Right cardiac atrium (tissue), 5 donors: ENCODE measurements at regions of chr5 and their contacts with region 1.

Region 1: DNA sequence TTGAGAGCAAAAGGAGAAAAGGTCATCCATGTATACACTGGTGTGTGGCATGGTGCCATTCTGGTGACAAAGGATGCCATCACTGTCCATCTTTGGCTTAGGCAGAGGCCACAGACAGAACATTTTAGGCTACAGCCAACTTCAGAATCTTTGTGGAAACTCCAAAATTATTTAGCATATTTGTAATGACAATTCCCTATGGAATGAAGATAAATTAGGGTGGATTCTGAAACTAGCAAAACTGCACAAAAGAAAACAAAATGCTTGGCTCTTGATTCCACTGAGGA is 92.5 kb downstream of the FBXW11 start:
- DNase-seq: no peak
- ATAC-seq: no peak
- H3K4me3 ChIP-seq: no peak overlapping the region
- H3K27ac ChIP-seq: no peak overlapping the region
- H3K4me1 ChIP-seq: peaks cover 9% of the 10 kb centered on the region
- H3K27me3 ChIP-seq: no peaks in the 10 kb centered on the region

Region 2: DNA sequence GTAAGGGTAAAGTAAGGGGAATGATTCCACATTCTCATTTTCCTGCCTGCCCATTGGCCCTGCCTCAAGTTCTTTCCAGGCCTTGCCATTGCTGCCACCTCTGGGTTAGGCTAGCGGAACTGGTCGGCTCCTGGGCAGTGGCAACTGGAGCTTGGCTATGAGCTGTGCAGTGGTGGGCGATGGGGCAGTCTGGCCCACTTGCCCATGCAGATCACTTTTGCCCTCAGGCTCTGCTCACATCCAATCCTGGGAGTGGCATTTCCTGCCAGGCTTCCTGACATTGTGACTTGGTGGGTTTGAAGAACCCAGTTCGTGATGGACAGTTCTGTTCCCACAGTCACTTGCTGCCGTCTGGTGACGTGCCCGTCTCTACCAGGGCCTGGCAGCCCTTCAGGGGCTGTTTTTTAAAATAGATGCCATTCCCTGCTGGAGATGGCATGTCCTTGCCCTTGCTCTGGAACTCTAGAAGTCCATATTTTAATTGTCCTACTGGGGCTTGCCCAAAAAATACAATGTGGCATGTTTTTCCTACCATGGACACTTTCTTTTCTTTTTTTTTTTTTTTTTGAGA is 408.4 kb before region 1 on chr5:
- intact Hi-C with region 1: no loop called
- DNase-seq: no peak
- ATAC-seq: peak; percentile 44 to 52
- H3K4me3 ChIP-seq: no peak overlapping the region
- H3K27ac ChIP-seq: no peak overlapping the region
- H3K4me1 ChIP-seq: no peaks in the 10 kb centered on the region
- H3K27me3 ChIP-seq: no peaks in the 10 kb centered on the region

Region 3: GRCh38 chr5:172006321-172007174 is 92.6 kb after region 1 on chr5 and contains the start of gene FBXW11:
- intact Hi-C with region 1: loop called in 2 of 4 experiments (anchors 10 kb)
- DNase-seq: peak; percentile 98 to 99 (median 98)
- ATAC-seq: peak; percentile 96
- H3K4me3 ChIP-seq: peak within 1 kb of the TSS; percentile 67
- H3K27ac ChIP-seq: peak within 1 kb of the TSS; percentile 96
- H3K4me1 ChIP-seq: peaks cover 3% of the 10 kb centered on the region
- H3K27me3 ChIP-seq: no peaks in the 10 kb centered on the region
- total RNA-seq, gene FBXW11: 62.3 to 70.7 (median 67.3) TPM

Region 4: GRCh38 chr5:172035039-172035438 is 121.1 kb after region 1 on chr5:
- intact Hi-C with region 1: loop called (anchors 2 to 5 kb)
- DNase-seq: no peak
- ATAC-seq: no peak
- H3K4me3 ChIP-seq: no peak overlapping the region
- H3K27ac ChIP-seq: no peak overlapping the region
- H3K4me1 ChIP-seq: no peaks in the 10 kb centered on the region
- H3K27me3 ChIP-seq: no peaks in the 10 kb centered on the region

Region 5: DNA sequence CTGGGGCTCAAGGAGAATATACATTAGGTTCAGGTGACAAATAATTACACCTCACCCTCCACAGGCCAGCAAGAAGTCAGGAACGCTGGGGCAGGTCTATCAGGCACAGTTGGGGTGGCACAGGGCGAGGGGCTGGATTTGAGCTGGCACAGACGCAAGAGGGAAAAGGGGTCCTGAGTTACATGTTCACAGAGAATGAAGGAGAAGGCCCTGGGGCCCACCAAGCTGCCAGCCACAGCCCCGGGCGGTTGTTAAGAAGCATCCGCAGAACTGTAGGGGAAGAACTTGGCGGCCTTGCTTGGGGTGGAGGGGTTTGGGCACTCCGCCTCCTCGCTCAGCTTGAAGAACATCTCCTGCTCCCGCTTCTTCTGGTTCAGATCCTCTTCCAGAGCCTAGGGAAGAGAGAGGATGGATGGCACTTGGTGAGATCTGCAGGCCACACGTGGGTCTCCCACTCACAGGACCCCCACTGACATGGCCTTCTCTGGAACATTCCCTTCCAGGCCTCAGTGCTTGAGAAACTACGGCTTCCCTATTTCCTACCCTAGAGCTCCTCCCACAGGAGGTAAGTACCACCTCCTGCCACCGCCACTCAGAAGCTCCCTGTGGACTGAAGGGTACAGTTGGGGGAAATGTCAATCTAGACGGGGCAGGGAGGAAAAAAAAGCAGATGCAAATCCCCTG is 130.8 kb after region 1 on chr5:
- intact Hi-C with region 1: loop called (anchors 2 to 5 kb)
- DNase-seq: no peak
- ATAC-seq: no peak
- H3K4me3 ChIP-seq: no peak overlapping the region
- H3K27ac ChIP-seq: no peak overlapping the region
- H3K4me1 ChIP-seq: no peaks in the 10 kb centered on the region
- H3K27me3 ChIP-seq: no peaks in the 10 kb centered on the region

Region 6: GRCh38 chr5:172059661-172060100 is 145.8 kb after region 1 on chr5:
- intact Hi-C with region 1: loop called in 1 of 4 experiments (anchors 5 kb)
- DNase-seq: no peak
- ATAC-seq: peak in 1 of 2 donors; percentile 18
- H3K4me3 ChIP-seq: no peak overlapping the region
- H3K27ac ChIP-seq: no peak overlapping the region
- H3K4me1 ChIP-seq: no peaks in the 10 kb centered on the region
- H3K27me3 ChIP-seq: no peaks in the 10 kb centered on the region

Region 7: GRCh38 chr5:172188033-172188892 is 274.3 kb after region 1 on chr5 and contains the start of gene STK10:
- intact Hi-C with region 1: loop called in 2 of 4 experiments (anchors 5 kb)
- DNase-seq: peak; percentile 95 to 97 (median 97)
- ATAC-seq: peak; percentile 96 to 98
- H3K4me3 ChIP-seq: peak within 1 kb of the TSS; percentile 93
- H3K27ac ChIP-seq: peak within 1 kb of the TSS; percentile 77
- H3K4me1 ChIP-seq: peaks cover 3% of the 10 kb centered on the region
- H3K27me3 ChIP-seq: no peaks in the 10 kb centered on the region
- total RNA-seq, gene STK10: 10.1 to 15.7 (median 11.3) TPM

Region 8: GRCh38 chr5:172322028-172322965 is 408.4 kb after region 1 on chr5:
- intact Hi-C with region 1: no loop called
- DNase-seq: no peak
- ATAC-seq: peak in 1 of 2 donors; percentile 40
- H3K4me3 ChIP-seq: no peak overlapping the region
- H3K27ac ChIP-seq: no peak overlapping the region
- H3K4me1 ChIP-seq: peaks cover 2% of the 10 kb centered on the region
- H3K27me3 ChIP-seq: no peaks in the 10 kb centered on the region